ENCODE measurements at regions of chr7 and their contacts with region 1.

Region 1: GRCh38 chr7:1137510-1138167 is 22.4 kb downstream of the ZFAND2A start:
- DNase-seq: no peak
- H3K4me3 ChIP-seq: peak overlapping the region; percentile 80 to 85
- H3K27ac ChIP-seq: peak overlapping the region; percentile 66 to 74
- H3K4me1 ChIP-seq: peaks cover 5 to 11% of the 10 kb centered on the region in 2 donors
- H3K27me3 ChIP-seq: no peaks in the 10 kb centered on the region
- CTCF ChIP-seq: no peak

Region 2: DNA sequence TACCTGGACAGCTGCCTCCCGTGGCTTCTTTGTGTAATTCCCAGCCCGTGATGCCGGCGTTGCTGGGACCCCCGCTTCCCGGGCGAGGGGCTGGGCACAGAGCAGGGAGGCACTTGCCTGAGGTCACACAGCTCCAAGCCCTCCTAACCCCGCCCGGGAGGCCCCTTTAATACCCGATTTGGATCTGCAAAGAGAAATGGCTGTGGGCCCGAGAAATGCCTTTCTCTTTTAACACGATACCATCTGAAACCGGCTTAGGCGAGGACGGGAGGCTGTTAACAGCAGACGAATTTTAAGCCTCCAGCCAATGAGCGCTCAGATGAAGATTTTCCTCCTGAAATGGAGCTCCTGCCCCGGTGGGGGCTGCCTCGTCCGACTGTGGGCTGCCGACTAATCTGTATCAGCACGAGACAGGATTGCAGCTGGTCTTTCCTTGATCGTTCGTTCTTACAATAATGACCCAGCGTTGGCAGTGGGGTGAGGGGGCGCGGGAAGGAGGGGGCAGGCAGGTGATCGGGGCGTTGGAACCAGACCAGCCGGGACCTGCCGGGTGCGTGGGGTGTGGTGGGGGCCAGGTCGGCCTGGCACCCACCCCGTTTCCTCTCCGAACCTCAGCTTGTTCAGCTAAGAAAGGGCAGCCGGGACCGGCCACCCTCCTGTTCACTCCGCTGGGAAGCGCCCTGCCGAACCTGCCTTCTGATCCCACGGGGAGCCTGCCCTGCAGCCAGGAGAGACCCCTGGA is 883.9 kb before region 1 on chr7:
- intact Hi-C with region 1: no loop called
- DNase-seq: no peak
- H3K4me3 ChIP-seq: no peak overlapping the region
- H3K27ac ChIP-seq: no peak overlapping the region
- H3K4me1 ChIP-seq: no peaks in the 10 kb centered on the region
- H3K27me3 ChIP-seq: no peaks in the 10 kb centered on the region
- CTCF ChIP-seq: no peak

Region 3: GRCh38 chr7:1044191-1045068 is 93.2 kb before region 1 on chr7 and contains the start of gene GPR146:
- intact Hi-C with region 1: loop called (anchors 1 kb)
- DNase-seq: peak; percentile 92 to 99
- H3K4me3 ChIP-seq: peak within 1 kb of the TSS; percentile 74 to 77
- H3K27ac ChIP-seq: peak within 1 kb of the TSS; percentile 80 to 94
- H3K4me1 ChIP-seq: peaks cover 3 to 22% of the 10 kb centered on the region in 2 donors
- H3K27me3 ChIP-seq: no peaks in the 10 kb centered on the region
- CTCF ChIP-seq: peak; percentile 61 to 78 (median 72)
- total RNA-seq, gene GPR146: 224 TPM

Region 4: DNA sequence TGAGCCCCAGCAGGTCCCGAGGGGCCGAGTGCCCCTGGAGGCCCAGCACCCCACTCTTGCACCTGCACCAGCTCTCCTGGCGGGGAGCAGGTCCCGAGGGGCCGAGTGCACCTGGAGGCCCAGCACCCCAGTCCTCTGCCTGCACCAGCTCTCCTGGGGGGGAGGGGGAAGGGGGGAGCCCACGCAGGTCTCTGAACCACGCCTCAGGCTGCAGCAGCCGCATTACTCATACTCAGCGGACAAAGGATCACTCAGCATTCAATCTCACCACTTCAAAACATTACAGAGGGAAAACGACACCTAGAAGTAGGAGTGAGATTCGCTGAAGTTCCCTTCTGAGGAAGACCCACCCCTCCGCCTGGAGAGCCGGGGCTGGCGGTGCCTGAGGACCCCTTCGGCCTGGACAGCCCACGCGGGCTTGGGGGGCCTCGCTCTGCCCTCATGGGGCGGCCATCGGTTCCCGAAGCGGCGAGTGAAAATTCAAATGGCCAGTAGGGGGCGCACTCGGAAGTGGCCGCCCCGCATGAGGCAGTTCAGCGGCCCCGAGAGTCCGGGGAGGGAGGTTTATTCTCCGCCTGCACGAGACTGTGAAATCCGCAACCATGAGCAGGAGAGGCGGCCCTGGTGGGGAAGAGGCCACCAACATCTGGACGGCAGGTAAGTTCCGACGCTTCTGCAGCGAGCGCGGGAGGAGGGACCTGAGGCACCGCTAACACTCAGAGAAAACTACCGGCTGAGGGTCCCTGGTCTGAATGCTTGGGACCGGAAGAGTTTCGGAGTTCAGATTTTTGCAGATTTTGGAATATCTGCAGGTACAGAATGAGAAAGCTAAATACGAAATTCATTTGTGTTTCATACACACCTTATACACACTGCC is 50.8 kb before region 1 on chr7:
- intact Hi-C with region 1: loop called (anchors 1 kb)
- DNase-seq: peak in 1 of 2 donors; percentile 80
- H3K4me3 ChIP-seq: peak overlapping the region; percentile 56 to 57
- H3K27ac ChIP-seq: peak overlapping the region; percentile 11 to 45
- H3K4me1 ChIP-seq: peaks cover 11 to 30% of the 10 kb centered on the region in 2 donors
- H3K27me3 ChIP-seq: no peaks in the 10 kb centered on the region
- CTCF ChIP-seq: peak; percentile 84 to 93 (median 87)

Region 5: DNA sequence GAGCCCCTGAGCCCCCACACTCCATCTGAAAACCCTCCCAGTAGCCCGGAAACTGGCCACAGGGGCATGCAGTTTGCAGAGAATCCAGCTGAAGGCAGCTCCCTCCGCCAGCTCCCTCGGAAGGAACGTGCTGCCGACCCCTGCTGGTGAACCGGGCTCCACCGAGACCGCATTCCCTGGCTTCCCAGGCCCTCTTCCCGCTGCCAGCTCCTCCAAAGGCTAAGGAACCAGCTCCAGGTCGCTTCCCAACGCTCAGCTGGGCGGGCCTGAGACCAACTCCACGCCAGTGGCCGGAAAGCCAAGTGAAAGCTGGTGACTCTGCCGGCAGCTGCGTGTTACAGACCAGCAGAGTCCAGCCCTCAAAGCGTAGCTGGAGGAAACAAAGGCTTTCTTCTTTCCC is 13.9 kb before region 1 on chr7:
- intact Hi-C with region 1: loop called (anchors 1 kb)
- DNase-seq: peak; percentile 43 to 94
- H3K4me3 ChIP-seq: peak overlapping the region; percentile 10 to 60
- H3K27ac ChIP-seq: peak overlapping the region; percentile 84 to 91
- H3K4me1 ChIP-seq: peaks cover 7 to 16% of the 10 kb centered on the region in 2 donors
- H3K27me3 ChIP-seq: no peaks in the 10 kb centered on the region
- CTCF ChIP-seq: peak; percentile 66 to 72 (median 70)

Region 6: DNA sequence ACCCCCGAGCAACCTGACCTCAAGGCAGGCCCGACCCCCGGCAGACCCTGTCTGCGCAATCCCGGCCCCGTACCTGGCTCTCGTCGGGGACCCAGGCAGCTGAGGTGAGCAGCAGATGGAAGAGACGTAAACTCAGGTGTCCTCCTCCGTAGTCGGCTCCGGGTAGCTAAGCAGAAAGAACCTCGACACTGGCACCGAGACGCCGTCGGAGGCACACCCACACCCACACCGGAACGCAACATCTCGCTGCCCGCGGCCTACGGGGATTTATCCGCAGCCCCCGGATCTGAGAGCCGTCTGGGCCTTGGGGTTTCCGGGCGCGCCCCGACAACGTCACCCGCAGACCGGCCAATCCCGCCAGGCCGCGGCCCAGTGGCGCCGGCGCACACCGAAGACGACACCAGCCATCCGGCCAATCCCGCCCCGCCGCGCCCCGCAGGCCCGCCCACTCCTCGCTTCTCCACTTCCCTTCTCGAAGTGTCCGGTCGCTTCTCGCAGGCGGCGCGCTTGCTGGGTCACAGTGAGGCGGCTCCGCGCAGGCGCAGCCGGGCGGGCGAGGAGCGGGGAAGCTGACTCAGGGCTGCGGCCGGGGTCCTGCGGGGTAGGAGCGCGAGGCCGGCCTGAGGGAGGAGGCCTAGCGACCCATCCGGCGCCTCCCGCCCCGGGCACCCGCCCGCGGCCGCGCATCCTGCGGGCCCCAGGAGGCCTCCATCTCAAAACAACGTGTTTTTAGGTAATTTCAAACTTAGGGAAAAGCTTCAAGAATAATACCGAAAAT is 22.4 kb after region 1 on chr7 and contains the start of gene ZFAND2A:
- intact Hi-C with region 1: loop called (anchors 1 kb)
- DNase-seq: peak; percentile 96 to 99
- H3K4me3 ChIP-seq: peak within 1 kb of the TSS; percentile 88 to 96
- H3K27ac ChIP-seq: peak within 1 kb of the TSS; percentile 87 to 96
- H3K4me1 ChIP-seq: peaks cover 0 to 15% of the 10 kb centered on the region in 2 donors
- H3K27me3 ChIP-seq: no peaks in the 10 kb centered on the region
- CTCF ChIP-seq: no peak
- total RNA-seq, gene ZFAND2A: 5.6 TPM